PC-9 (cell line): ENCODE measurements at regions of chr2 and their contacts with region 1.

Region 1: GRCh38 chr2:85437488-85438284 is 19.2 kb downstream of the SH2D6 start:
- DNase-seq: peak in 1 of 2 experiments; percentile 74
- H3K4me3 ChIP-seq: peak overlapping the region; percentile 42; the same call in 1 of the 2 replicates
- H3K27ac ChIP-seq: peak overlapping the region; percentile 27; the same call in 1 of the 2 replicates
- H3K4me1 ChIP-seq: peaks cover 36% of the 10 kb centered on the region
- H3K27me3 ChIP-seq: no peaks in the 10 kb centered on the region
- CTCF ChIP-seq: no peak

Region 2: GRCh38 chr2:85485815-85486214 is 48.1 kb after region 1 on chr2:
- CTCF ChIA-PET with region 1: interaction called, 12 read pairs
- POLR2A ChIA-PET with region 1: no interaction called
- intact Hi-C with region 1: no loop called
- DNase-seq: no peak
- H3K4me3 ChIP-seq: no peak overlapping the region
- H3K27ac ChIP-seq: no peak overlapping the region
- H3K4me1 ChIP-seq: no peaks in the 10 kb centered on the region
- H3K27me3 ChIP-seq: no peaks in the 10 kb centered on the region
- CTCF ChIP-seq: no peak